ENCODE measurements at regions of chr22 and their contacts with region 1.

Region 1: GRCh38 chr22:42070517-42071422 is at the start of gene NAGA:
- DNase-seq: peak; percentile 91 to 95 (median 94)
- H3K4me3 ChIP-seq: peak within 1 kb of the TSS; percentile 57 to 81 (median 74)
- H3K4me3 Mint-ChIP-seq: peak within 1 kb of the TSS; percentile 87 to 91
- H3K27ac ChIP-seq: peak within 1 kb of the TSS; percentile 87
- H3K27ac Mint-ChIP-seq: peak within 1 kb of the TSS; percentile 91 to 98 (median 96)
- H3K4me1 ChIP-seq: peaks cover 52 to 76% of the 10 kb centered on the region in 2 donors
- H3K4me1 Mint-ChIP-seq: peaks cover 65% of the 10 kb centered on the region
- H3K27me3 ChIP-seq: no peaks in the 10 kb centered on the region
- H3K27me3 Mint-ChIP-seq: peaks cover 0 to 2% (median 2%) of the 10 kb centered on the region in 3 donors
- CTCF ChIP-seq: no peak
- polyA plus RNA-seq, gene NAGA: 123 to 218 (median 200) TPM

Region 2: GRCh38 chr22:41998361-41999275 is 72.2 kb before region 1 on chr22 and contains the start of gene WBP2NL:
- intact Hi-C with region 1: loop called (anchors 5 kb)
- DNase-seq: peak; percentile 79 to 92 (median 91)
- H3K4me3 ChIP-seq: peak within 1 kb of the TSS; percentile 56 to 84 (median 73)
- H3K4me3 Mint-ChIP-seq: peak within 1 kb of the TSS; percentile 83 to 99
- H3K27ac ChIP-seq: peak within 1 kb of the TSS; percentile 48 to 77
- H3K27ac Mint-ChIP-seq: peak within 1 kb of the TSS; percentile 47 to 97 (median 95)
- H3K4me1 ChIP-seq: peaks cover 17 to 20% of the 10 kb centered on the region in 2 donors
- H3K4me1 Mint-ChIP-seq: peaks cover 23% of the 10 kb centered on the region
- H3K27me3 ChIP-seq: no peaks in the 10 kb centered on the region
- H3K27me3 Mint-ChIP-seq: peaks cover 3 to 11% (median 6%) of the 10 kb centered on the region in 3 donors
- CTCF ChIP-seq: no peak
- polyA plus RNA-seq, gene WBP2NL: 0.48 to 0.83 (median 0.71) TPM

Region 3: GRCh38 chr22:42022162-42022835 is 48.5 kb before region 1 on chr22:
- intact Hi-C with region 1: no loop called
- DNase-seq: peak; percentile 19 to 38 (median 19)
- H3K4me3 ChIP-seq: no peak overlapping the region
- H3K4me3 Mint-ChIP-seq: no peak overlapping the region
- H3K27ac ChIP-seq: no peak overlapping the region
- H3K27ac Mint-ChIP-seq: peak overlapping the region in 2 of 7 donors; percentile 55 to 71
- H3K4me1 ChIP-seq: peaks cover 8 to 10% of the 10 kb centered on the region in 2 donors
- H3K4me1 Mint-ChIP-seq: peaks cover 8% of the 10 kb centered on the region
- H3K27me3 ChIP-seq: no peaks in the 10 kb centered on the region
- H3K27me3 Mint-ChIP-seq: peaks cover 0 to 9% (median under 1%) of the 10 kb centered on the region in 3 donors
- CTCF ChIP-seq: no peak